Activated naive CD4-positive, alpha-beta T cell treated with anti-CD3 and anti-CD28 coated beads for 36 hours (primary cell): ENCODE measurements at regions of chr12 and their contacts with region 1.

Region 1: GRCh38 chr12:7018350-7019042 is at the start of gene LPCAT3:
- DNase-seq: peak; percentile 98
- H3K4me3 Mint-ChIP-seq: peak within 1 kb of the TSS; percentile 94
- H3K27ac Mint-ChIP-seq: peak within 1 kb of the TSS; percentile 92
- H3K4me1 Mint-ChIP-seq: peaks cover 35% of the 10 kb centered on the region
- H3K27me3 Mint-ChIP-seq: no peaks in the 10 kb centered on the region
- total RNA-seq, gene LPCAT3: 22.7 to 27.2 TPM

Region 2: DNA sequence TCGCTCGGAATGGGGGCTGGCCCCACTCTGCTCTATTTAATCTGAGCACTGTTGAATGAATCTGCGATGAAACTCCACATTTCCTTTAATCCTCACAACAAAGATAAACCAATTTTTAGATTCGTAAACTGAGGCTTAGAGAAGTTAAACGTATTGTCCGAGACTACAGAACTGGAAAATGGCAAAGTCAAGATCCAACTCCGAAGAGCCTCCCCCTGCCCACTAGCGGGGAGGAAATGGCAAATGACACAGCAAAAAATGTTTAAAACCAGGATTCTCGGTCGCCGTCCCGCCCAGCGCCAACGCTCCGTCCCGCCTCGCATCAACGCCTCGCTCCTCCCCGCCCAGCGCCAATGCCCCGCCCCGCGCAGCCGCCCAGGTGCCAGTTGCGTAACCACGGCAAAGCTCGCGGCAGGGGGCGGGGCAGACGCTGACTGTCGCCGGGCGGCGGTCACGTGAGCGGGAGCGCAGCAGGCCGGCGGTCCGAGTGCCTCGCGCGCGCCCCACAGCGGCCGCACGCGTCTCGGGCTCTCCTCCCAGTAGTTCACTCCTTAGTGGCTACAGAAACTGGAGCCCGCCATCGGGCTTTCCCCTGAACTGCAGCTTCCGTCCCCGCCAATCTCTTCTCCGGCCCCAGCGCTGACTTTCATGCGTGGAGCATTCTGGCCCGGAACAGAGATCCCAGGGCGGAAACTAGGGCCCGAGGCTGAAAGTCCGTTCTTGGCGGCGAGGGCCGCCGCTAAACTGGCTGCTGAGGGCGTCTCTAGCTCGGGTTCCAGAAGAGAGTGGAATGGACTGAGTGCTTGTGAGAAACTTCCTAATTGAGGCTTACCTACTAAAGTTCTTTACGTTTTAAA is 127.5 kb before region 1 on chr12:
- CTCF ChIA-PET with region 1: no interaction called
- intact Hi-C with region 1: loop called (anchors 1 kb)
- DNase-seq: peak; percentile 100
- H3K4me3 Mint-ChIP-seq: peak overlapping the region; percentile 90
- H3K27ac Mint-ChIP-seq: peak overlapping the region; percentile 98
- H3K4me1 Mint-ChIP-seq: peaks cover 16% of the 10 kb centered on the region
- H3K27me3 Mint-ChIP-seq: no peaks in the 10 kb centered on the region

Region 3: GRCh38 chr12:6927379-6928024 is 91.0 kb before region 1 on chr12 and contains the start of gene ATN1:
- CTCF ChIA-PET with region 1: no interaction called
- intact Hi-C with region 1: loop called (anchors 1 kb)
- DNase-seq: peak; percentile 51
- H3K4me3 Mint-ChIP-seq: peak within 1 kb of the TSS; percentile 75
- H3K27ac Mint-ChIP-seq: peak within 1 kb of the TSS; percentile 81
- H3K4me1 Mint-ChIP-seq: peaks cover 59% of the 10 kb centered on the region
- H3K27me3 Mint-ChIP-seq: no peaks in the 10 kb centered on the region
- total RNA-seq, gene ATN1: 20.1 to 22.2 TPM

Region 4: GRCh38 chr12:6965026-6965661 is 53.4 kb before region 1 on chr12:
- CTCF ChIA-PET with region 1: no interaction called
- intact Hi-C with region 1: loop called (anchors 1 kb)
- DNase-seq: peak; percentile 95
- H3K4me3 Mint-ChIP-seq: no peak overlapping the region
- H3K27ac Mint-ChIP-seq: peak overlapping the region; percentile 93
- H3K4me1 Mint-ChIP-seq: peaks cover 81% of the 10 kb centered on the region
- H3K27me3 Mint-ChIP-seq: no peaks in the 10 kb centered on the region

Region 5: DNA sequence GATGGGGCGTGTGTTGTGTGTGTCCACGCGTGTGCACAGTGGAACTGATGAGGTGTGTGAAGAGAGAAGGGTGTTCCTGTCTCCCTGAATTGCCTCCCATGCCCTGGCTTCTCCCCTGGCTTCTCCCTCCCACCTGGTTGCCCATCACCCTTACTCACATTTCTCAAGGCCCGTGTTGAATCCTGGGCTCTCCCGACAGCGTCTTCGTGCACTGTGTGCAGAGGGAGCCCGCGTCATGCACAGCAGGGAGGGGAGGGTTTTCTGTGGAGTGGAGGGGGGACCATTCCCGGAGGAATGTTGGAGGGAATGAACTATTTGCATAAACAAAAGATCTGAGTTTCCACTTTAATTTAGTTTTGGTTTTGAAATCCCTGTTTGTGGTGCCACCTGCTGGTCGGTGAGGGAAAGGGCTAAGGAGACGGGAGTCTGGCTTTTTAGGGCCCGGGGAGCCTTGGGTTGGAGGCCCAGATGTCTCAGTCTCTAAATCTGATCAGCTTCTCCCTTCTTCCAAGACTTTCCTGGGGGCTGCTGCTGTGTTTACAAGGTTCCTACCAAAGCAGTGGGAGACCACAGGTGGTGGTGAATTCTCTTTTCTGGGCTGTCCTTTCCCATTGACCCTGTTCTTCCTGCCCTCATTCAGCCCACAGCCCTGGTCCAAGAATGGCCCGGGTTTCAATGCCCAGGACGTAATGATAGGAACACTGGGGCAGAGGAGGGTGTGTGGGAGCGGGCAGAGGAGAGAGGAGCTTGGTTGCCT is 73.9 kb after region 1 on chr12 and contains the start of gene C1R:
- CTCF ChIA-PET with region 1: interaction called, 3 read pairs
- intact Hi-C with region 1: loop called (anchors 1 kb)
- DNase-seq: peak; percentile 83
- H3K4me3 Mint-ChIP-seq: peak within 1 kb of the TSS; percentile 73
- H3K27ac Mint-ChIP-seq: peak within 1 kb of the TSS; percentile 22
- H3K4me1 Mint-ChIP-seq: peaks cover 7% of the 10 kb centered on the region
- H3K27me3 Mint-ChIP-seq: no peaks in the 10 kb centered on the region
- total RNA-seq, gene C1R: 1.4 to 1.5 TPM

Region 6: GRCh38 chr12:7188562-7189397 is 170.3 kb after region 1 on chr12:
- CTCF ChIA-PET with region 1: no interaction called
- intact Hi-C with region 1: loop called (anchors 1 kb)
- DNase-seq: peak; percentile 87
- H3K4me3 Mint-ChIP-seq: peak overlapping the region; percentile 88
- H3K27ac Mint-ChIP-seq: peak overlapping the region; percentile 95
- H3K4me1 Mint-ChIP-seq: peaks cover 36% of the 10 kb centered on the region
- H3K27me3 Mint-ChIP-seq: no peaks in the 10 kb centered on the region

Region 7: GRCh38 chr12:8026291-8026900 is 1007.9 kb after region 1 on chr12:
- CTCF ChIA-PET with region 1: no interaction called
- intact Hi-C with region 1: loop called (anchors 2 kb)
- DNase-seq: peak; percentile 99
- H3K4me3 Mint-ChIP-seq: peak overlapping the region; percentile 94
- H3K27ac Mint-ChIP-seq: peak overlapping the region; percentile 100
- H3K4me1 Mint-ChIP-seq: peaks cover 11% of the 10 kb centered on the region
- H3K27me3 Mint-ChIP-seq: no peaks in the 10 kb centered on the region